A673 (cell line): ENCODE measurements at regions of chr1 and their contacts with region 1.

Region 1: DNA sequence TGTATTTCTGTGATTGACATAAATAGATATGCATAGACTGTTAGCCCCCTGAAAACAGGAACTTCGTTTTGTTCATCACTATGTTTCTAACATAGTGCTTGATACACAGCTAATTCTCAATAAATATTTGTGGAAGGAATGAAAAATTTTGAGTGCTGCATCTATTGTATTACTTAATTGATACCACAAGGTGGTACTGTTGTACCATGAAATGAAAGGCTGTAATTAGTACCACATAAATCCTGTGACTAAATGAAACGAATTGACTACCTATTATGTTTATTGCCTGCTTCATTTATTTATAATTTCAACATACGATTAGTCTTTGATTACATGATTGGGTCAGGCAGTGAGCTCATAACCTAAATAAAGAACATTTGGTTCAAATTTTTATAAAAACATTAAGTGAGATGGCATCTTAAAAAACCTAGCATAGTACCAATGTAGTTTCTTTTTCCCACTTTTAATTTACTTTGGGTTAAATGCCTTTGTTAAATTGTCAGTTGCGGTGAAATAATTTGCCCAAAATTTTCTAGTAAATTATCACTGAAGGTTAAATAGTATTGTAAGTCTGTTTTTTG is 15.0 kb upstream of the TGFB2 start:
- DNase-seq: peak; percentile 49
- H3K4me3 ChIP-seq: no peak overlapping the region
- H3K27ac ChIP-seq: no peak overlapping the region
- H3K4me1 ChIP-seq: no peaks in the 10 kb centered on the region
- H3K27me3 ChIP-seq: no peaks in the 10 kb centered on the region
- CTCF ChIP-seq: peak; percentile 75

Region 2: GRCh38 chr1:218585511-218586184 is 255.5 kb after region 1 on chr1:
- CTCF ChIA-PET with region 1: interaction called, 11 read pairs
- POLR2A ChIA-PET with region 1: no interaction called
- intact Hi-C with region 1: no loop called
- DNase-seq: no peak
- H3K4me3 ChIP-seq: no peak overlapping the region
- H3K27ac ChIP-seq: no peak overlapping the region
- H3K4me1 ChIP-seq: no peaks in the 10 kb centered on the region
- H3K27me3 ChIP-seq: peaks cover 7% of the 10 kb centered on the region
- CTCF ChIP-seq: no peak

Region 3: GRCh38 chr1:219385786-219386427 is 1055.8 kb after region 1 on chr1:
- CTCF ChIA-PET with region 1: no interaction called
- POLR2A ChIA-PET with region 1: no interaction called
- intact Hi-C with region 1: loop called (anchors 5 kb)
- DNase-seq: peak; percentile 69
- H3K4me3 ChIP-seq: no peak overlapping the region
- H3K27ac ChIP-seq: no peak overlapping the region
- H3K4me1 ChIP-seq: no peaks in the 10 kb centered on the region
- H3K27me3 ChIP-seq: peaks cover 31% of the 10 kb centered on the region
- CTCF ChIP-seq: peak; percentile 84

Region 4: DNA sequence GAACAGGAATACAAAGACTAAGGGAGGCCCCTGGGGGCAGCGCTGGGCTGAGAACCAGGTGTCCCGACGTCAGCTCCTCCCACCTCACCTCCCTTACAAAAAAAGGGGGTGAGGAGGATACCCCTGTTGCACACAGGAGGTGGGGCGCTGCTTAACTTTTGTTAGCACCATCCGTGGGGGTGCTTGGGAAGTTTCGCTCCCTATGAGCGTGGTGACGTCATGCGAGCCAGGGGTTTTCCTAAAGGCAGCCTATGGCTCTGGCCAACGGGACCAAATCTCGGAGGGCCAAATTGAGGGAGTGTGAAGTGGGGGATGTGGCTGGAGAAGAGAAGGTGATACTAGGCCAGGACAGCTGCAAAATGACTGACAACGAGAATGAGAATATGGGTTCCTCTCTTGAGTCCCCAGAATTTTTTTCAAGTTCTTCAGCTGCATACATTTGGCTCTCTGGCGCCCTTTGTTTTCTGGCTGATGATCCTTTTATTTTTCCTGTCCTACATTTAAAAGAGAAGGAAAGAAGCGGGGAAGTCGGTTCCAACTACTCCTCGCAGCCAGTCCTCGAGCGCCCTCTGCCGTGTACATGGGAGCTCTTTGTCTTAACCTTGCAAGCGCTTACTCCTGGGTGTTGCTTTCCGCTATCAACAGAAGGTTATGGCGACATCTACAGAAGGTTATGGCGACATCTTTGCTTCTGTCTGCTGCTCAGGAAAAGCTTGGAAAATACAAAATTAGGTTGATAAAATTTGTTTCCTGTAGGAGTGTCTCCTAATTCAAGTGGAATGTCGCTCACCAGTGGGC is 1330.7 kb after region 1 on chr1:
- CTCF ChIA-PET with region 1: no interaction called
- POLR2A ChIA-PET with region 1: no interaction called
- intact Hi-C with region 1: loop called (anchors 2 kb)
- DNase-seq: peak; percentile 91
- H3K4me3 ChIP-seq: no peak overlapping the region
- H3K27ac ChIP-seq: no peak overlapping the region
- H3K4me1 ChIP-seq: peaks cover 9% of the 10 kb centered on the region
- H3K27me3 ChIP-seq: peaks cover 35% of the 10 kb centered on the region
- CTCF ChIP-seq: peak; percentile 89

Region 5: GRCh38 chr1:220182656-220183055 is 1852.5 kb after region 1 on chr1:
- CTCF ChIA-PET with region 1: no interaction called
- POLR2A ChIA-PET with region 1: interaction called, 10 read pairs
- intact Hi-C with region 1: no loop called
- DNase-seq: no peak
- H3K4me3 ChIP-seq: no peak overlapping the region
- H3K27ac ChIP-seq: no peak overlapping the region
- H3K4me1 ChIP-seq: no peaks in the 10 kb centered on the region
- H3K27me3 ChIP-seq: no peaks in the 10 kb centered on the region
- CTCF ChIP-seq: no peak